ENCODE measurements at regions of chr14 and their contacts with region 1.

Region 1: GRCh38 chr14:60622917-60623257 is 26.4 kb downstream of the SIX1 start:
- DNase-seq: no peak
- H3K4me3 ChIP-seq: no peak overlapping the region
- H3K27ac ChIP-seq: no peak overlapping the region
- H3K4me1 ChIP-seq: peaks cover 10% of the 10 kb centered on the region
- H3K27me3 ChIP-seq: peaks cover 0 to 2% of the 10 kb centered on the region in 2 experiments
- CTCF ChIP-seq: no peak
- POLR2A ChIP-seq: no peak

Region 2: DNA sequence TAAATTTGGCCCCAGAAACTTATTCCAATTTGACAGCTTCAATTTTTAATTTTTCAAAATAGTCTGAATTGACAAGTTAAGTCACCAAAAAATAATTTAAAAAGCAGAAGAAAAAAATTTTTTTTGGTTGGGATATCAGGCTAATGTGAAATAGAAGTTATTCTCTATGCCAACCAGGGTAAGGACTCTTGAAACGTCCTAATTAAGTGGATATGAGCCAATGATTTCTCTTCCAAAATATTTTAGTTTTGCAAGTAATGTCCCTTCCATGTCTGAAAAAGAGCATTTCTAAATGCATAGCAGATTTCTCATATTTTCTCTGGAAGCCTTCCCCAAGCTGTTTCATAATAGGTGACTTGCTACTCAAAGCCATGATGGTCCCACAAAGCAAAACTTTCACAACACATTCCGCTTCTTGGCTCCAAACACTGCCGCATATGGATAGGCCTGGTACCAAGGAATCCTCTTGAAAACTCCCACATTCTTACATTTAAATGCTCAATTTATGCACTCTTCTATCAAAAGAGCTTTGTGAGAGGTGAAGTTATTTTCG is 48.9 kb before region 1 on chr14:
- CTCF ChIA-PET with region 1: no interaction called
- POLR2A ChIA-PET with region 1: no interaction called
- dilution Hi-C with region 1: no loop called
- intact Hi-C with region 1: no loop called
- DNase-seq: no peak
- H3K4me3 ChIP-seq: no peak overlapping the region
- H3K27ac ChIP-seq: no peak overlapping the region
- H3K4me1 ChIP-seq: no peaks in the 10 kb centered on the region
- H3K27me3 ChIP-seq: peaks cover 5 to 8% of the 10 kb centered on the region in 2 experiments
- CTCF ChIP-seq: no peak
- POLR2A ChIP-seq: no peak

Region 3: GRCh38 chr14:60590991-60591414 is 31.9 kb before region 1 on chr14:
- CTCF ChIA-PET with region 1: no interaction called
- POLR2A ChIA-PET with region 1: no interaction called
- dilution Hi-C with region 1: no loop called
- intact Hi-C with region 1: no loop called
- DNase-seq: no peak
- H3K4me3 ChIP-seq: no peak overlapping the region
- H3K27ac ChIP-seq: no peak overlapping the region
- H3K4me1 ChIP-seq: no peaks in the 10 kb centered on the region
- H3K27me3 ChIP-seq: peaks cover 8 to 23% of the 10 kb centered on the region in 2 experiments
- CTCF ChIP-seq: no peak
- POLR2A ChIP-seq: no peak

Region 4: GRCh38 chr14:60980811-60981632 is 358.1 kb after region 1 on chr14 and contains the starts of genes SLC38A6 and TRMT5:
- CTCF ChIA-PET with region 1: interaction called, 13 read pairs
- POLR2A ChIA-PET with region 1: no interaction called
- dilution Hi-C with region 1: no loop called
- intact Hi-C with region 1: loop called (anchors 1 kb)
- DNase-seq: peak; percentile 98
- H3K4me3 ChIP-seq: peak within 1 kb of the TSS; percentile 27 to 72 (median 61)
- H3K27ac ChIP-seq: peak within 1 kb of the TSS; percentile 83
- H3K4me1 ChIP-seq: peaks cover 46% of the 10 kb centered on the region
- H3K27me3 ChIP-seq: no peaks in the 10 kb centered on the region
- CTCF ChIP-seq: no peak
- POLR2A ChIP-seq: peak; percentile 51
- total RNA-seq, gene SLC38A6: 21.6 and 24.6 TPM in 2 replicates
- total RNA-seq, gene TRMT5: 12.6 and 13.5 TPM in 2 replicates

Region 5: DNA sequence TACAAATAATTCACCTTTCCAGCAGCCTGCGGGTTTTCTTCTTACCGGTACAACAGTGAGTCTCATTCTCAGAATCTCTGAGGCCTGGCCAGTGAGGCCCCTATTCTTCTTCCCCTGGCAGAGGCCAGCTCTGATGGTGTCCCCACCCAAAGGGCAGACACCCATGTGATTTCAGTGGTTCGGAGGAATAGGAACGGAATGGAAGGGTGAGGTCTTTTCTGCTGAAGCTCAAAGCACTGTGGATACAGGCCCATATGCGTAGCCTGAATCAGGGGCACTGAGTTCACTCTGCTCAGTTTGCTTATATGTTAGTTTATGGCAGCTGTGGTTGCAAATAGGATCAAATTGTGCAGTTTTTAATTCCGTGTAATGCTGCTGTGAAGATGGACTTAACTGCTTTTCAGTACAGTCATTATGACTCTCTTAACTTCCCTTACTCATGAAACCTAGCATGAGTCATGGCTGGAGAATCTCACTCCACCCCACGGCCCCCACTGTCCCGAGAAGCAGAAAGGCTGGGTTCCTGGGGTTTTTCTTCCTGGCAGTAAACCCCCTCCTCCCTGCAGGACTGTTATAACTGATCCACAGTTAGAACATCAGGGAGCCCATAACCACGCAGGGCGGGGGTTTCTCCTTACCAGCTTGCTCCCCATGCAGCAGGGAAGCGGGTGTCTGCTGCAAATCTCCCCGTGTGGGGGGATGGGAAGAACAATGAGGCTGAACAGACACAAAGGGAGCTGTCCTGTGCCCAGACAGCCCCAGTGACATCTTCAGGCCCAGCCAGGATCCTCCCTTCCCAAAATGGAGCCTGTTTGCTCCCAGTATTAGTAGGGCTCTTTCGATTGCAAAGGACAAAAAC is 480.8 kb after region 1 on chr14:
- CTCF ChIA-PET with region 1: interaction called, 3 read pairs
- POLR2A ChIA-PET with region 1: no interaction called
- dilution Hi-C with region 1: no loop called
- intact Hi-C with region 1: loop called (anchors 1 kb)
- DNase-seq: peak; percentile 94
- H3K4me3 ChIP-seq: peak overlapping the region in 1 of 3 experiments; percentile 17
- H3K27ac ChIP-seq: peak overlapping the region; percentile 100
- H3K4me1 ChIP-seq: peaks cover 66% of the 10 kb centered on the region
- H3K27me3 ChIP-seq: no peaks in the 10 kb centered on the region
- CTCF ChIP-seq: no peak
- POLR2A ChIP-seq: peak; percentile 52

Region 6: DNA sequence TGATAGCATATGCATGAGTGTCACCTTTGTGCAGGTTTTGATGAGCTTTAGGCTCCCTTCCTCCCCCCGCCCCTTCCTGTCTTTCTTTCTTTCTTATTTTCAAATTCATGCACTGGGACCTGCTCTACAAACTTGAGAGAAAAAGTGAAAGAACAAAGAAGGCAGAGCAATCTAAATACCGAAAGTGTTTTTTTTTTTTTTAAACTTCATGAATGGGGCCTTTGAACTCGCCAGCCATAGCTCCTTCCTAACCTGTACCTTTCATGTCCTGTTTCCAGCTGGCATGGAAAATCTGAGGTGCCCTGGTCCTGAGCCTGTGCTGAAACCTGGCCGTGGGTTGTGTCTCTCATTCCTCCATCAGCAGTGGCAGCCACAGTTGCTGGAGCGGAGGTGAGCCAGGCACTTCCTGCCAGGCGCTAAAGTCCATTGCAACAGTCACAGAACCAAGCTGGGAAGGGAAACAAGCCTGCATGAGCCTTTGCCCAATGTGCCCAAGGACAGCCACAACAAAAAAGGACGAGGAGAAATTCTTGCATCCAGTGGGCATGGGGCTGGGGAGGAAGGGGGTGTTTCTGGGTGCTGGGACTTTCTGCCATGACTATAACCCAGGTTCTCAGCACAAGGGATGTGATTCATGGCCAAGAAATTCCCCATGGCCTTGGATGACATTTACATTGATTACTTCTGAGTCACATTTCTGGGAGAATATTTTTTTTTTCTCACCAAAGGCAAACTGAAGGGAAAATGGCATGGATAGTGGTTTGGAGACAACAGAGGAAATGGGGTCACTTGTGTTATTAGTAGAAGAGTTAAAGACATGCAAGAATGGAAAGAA is 555.6 kb after region 1 on chr14:
- CTCF ChIA-PET with region 1: interaction called, 3 read pairs
- POLR2A ChIA-PET with region 1: no interaction called
- dilution Hi-C with region 1: no loop called
- intact Hi-C with region 1: loop called (anchors 1 kb)
- DNase-seq: peak; percentile 95
- H3K4me3 ChIP-seq: peak overlapping the region in 1 of 3 experiments; percentile 42
- H3K27ac ChIP-seq: peak overlapping the region; percentile 99
- H3K4me1 ChIP-seq: peaks cover 40% of the 10 kb centered on the region
- H3K27me3 ChIP-seq: no peaks in the 10 kb centered on the region
- CTCF ChIP-seq: no peak
- POLR2A ChIP-seq: peak; percentile 45

Region 7: GRCh38 chr14:61269321-61270083 is 646.6 kb after region 1 on chr14:
- CTCF ChIA-PET with region 1: interaction called, 15 read pairs
- POLR2A ChIA-PET with region 1: no interaction called
- dilution Hi-C with region 1: loop called (anchors 25 kb)
- intact Hi-C with region 1: no loop called
- DNase-seq: peak; percentile 90
- H3K4me3 ChIP-seq: peak overlapping the region in 2 of 3 experiments; percentile 33 to 39
- H3K27ac ChIP-seq: no peak overlapping the region
- H3K4me1 ChIP-seq: no peaks in the 10 kb centered on the region
- H3K27me3 ChIP-seq: peaks cover 15 to 17% of the 10 kb centered on the region in 2 experiments
- CTCF ChIP-seq: peak; percentile 66 to 71
- POLR2A ChIP-seq: no peak